ENCODE measurements at regions of chr2 and their contacts with region 1.

Region 1: GRCh38 chr2:231191896-231192872 is 6.2 kb upstream of the ARMC9 start:
- DNase-seq: peak; percentile 89
- H3K4me3 ChIP-seq: no peak overlapping the region
- H3K27ac ChIP-seq: peak overlapping the region; percentile 29 to 70; a peak in 3 of 4 replicates
- H3K4me1 ChIP-seq: peaks cover 7 to 15% of the 10 kb centered on the region in 2 experiments; a peak in 1 of 4 replicates
- H3K27me3 ChIP-seq: no peaks in the 10 kb centered on the region
- CTCF ChIP-seq: peak; percentile 81
- EP300 ChIP-seq: peak in 1 of 2 experiments; percentile 36; a peak in 1 of 4 replicates
- RAD21 ChIP-seq: peak; percentile 94

Region 2: DNA sequence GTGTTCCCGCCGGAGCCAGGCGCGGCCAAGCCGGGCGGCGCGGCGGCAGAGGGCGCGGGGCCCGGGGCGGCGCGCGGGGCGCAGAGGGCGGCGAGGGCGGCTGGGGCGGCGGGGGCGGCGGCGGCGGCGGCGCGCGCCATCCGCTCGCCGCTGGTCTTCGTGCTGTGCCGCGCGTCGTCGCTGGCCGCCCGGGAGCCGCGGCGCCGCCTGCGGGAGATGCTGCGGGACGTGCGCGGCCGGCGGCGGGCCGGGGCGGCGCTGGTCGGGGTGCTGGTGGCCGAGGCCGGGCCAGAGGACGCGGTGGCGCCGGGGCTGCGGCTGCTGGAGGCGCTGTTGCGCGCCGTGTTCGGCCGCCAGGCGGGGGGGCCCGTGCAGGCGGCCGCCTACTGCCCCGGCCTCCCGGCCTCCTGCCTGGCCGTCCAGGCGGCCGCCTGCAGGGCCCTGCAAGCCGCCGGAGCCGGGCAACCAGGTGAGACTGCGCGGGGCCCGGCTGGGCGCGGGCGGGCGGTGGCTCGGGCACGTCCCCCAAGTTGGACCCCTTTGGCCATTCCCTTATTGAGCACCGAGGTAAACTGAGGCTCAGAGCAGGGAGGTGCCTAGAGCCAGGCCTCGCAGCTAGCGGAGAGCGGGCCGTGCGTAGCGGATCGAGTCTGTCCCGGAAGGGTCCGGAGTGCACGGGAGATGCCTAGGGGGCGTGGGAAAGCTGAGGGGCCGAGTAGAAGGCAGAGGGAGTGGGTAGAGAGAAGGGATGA is 154.3 kb before region 1 on chr2:
- CTCF ChIA-PET with region 1: no interaction called
- POLR2A ChIA-PET with region 1: no interaction called
- DNase-seq: peak; percentile 91
- H3K4me3 ChIP-seq: peak overlapping the region in 1 of 2 experiments; percentile 47; a peak in 2 of 4 replicates
- H3K27ac ChIP-seq: no peak overlapping the region
- H3K4me1 ChIP-seq: peaks cover 0 to 6% of the 10 kb centered on the region in 2 experiments; a peak in 1 of 4 replicates
- H3K27me3 ChIP-seq: peaks cover 32% of the 10 kb centered on the region
- CTCF ChIP-seq: no peak
- EP300 ChIP-seq: no peak
- RAD21 ChIP-seq: no peak

Region 3: GRCh38 chr2:231110551-231110950 is 81.6 kb before region 1 on chr2:
- CTCF ChIA-PET with region 1: interaction called, 162 read pairs
- POLR2A ChIA-PET with region 1: no interaction called
- DNase-seq: no peak
- H3K4me3 ChIP-seq: no peak overlapping the region
- H3K27ac ChIP-seq: peak overlapping the region in 1 of 2 experiments; percentile 69; a peak in 2 of 4 replicates
- H3K4me1 ChIP-seq: peaks cover 4 to 9% of the 10 kb centered on the region in 2 experiments; a peak in 3 of 4 replicates
- H3K27me3 ChIP-seq: no peaks in the 10 kb centered on the region
- CTCF ChIP-seq: peak; percentile 44
- EP300 ChIP-seq: no peak
- RAD21 ChIP-seq: peak; percentile 74

Region 4: DNA sequence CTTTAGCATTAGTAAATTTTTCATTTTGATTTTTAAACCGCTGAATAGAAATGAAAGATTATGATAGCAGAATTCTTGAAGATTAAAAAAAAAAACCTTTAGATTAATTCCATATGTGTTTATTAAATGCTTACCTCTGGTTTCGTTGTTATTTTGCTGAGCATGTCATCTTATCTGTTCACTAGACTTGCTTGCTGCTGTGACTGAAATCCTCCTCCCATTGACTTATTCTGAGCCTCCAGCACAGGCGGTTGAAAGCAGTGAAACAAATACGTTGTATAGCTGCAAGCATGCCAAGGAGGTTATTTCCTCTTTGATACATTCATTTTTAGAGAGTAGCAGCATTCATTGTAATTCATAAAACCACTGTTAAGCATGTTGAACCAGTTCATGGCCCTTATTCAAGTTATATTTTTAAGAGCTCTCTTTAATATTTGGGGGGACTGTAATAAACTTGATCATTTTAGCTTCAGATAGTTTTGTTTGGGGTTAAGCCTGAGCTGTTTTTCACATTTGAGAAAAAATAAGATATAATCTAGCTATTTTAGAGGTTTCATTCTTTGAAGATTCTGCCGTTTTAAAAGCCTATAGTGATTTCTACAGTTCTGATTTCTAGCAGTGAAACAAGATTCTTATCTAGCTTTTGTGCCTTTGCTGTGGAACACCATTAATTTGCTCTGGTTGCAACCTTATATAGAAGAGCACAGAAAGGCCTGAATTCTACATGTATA is 67.2 kb before region 1 on chr2 and contains the start of gene HTR2B:
- CTCF ChIA-PET with region 1: interaction called, 15 read pairs
- POLR2A ChIA-PET with region 1: interaction called, 3 read pairs
- DNase-seq: peak; percentile 62
- H3K4me3 ChIP-seq: peak within 1 kb of the TSS; percentile 12 to 42; a peak in 2 of 4 replicates
- H3K27ac ChIP-seq: peak within 1 kb of the TSS; percentile 62 to 94
- H3K4me1 ChIP-seq: peaks cover 34 to 37% of the 10 kb centered on the region in 2 experiments; a peak in 3 of 4 replicates
- H3K27me3 ChIP-seq: no peaks in the 10 kb centered on the region
- CTCF ChIP-seq: no peak
- EP300 ChIP-seq: peak in 1 of 2 experiments; percentile 51; a peak in 1 of 4 replicates
- RAD21 ChIP-seq: peak; percentile 20; the same call in 1 of the 2 replicates
- polyA plus RNA-seq, gene HTR2B: 0.25 and 0.41 TPM in 2 replicates

Region 5: GRCh38 chr2:231170055-231170454 is 22.1 kb before region 1 on chr2:
- CTCF ChIA-PET with region 1: interaction called, 11 read pairs
- POLR2A ChIA-PET with region 1: no interaction called
- DNase-seq: no peak
- H3K4me3 ChIP-seq: no peak overlapping the region
- H3K27ac ChIP-seq: peak overlapping the region; percentile 82 to 96
- H3K4me1 ChIP-seq: peaks cover 12 to 17% of the 10 kb centered on the region in 2 experiments
- H3K27me3 ChIP-seq: no peaks in the 10 kb centered on the region
- CTCF ChIP-seq: no peak
- EP300 ChIP-seq: no peak; a peak in 1 of 4 replicates
- RAD21 ChIP-seq: no peak

Region 6: DNA sequence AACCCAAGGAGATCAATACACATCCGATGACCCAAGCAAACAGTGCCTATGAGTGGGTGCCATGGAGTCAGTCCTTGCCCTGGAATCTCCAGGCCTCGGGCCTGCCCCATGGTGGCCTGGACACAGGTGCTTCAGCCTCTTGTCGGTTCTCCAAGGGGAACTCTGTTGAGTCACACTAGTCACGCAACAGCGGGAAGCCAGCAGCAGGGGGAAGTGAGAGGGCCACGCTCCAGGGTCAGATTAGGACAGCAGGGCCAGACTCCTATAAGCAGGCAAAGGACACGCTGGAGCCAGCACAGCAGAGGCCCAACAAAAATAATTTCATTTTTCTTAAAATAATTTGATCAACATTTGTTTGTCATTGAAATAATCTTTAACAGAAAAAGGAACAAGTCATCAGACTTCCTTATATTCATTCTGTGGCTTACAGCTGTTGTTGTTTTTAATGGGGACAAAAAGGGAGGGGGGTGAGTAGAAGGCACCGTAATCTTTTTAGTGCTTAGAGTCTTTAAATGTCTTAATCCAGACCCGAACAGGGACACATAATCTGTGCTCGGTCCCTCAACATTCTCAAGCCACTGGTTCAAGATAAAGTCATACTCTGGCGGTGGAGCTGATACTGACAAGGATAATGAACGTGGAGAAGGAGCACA is 10.2 kb before region 1 on chr2:
- CTCF ChIA-PET with region 1: interaction called, 15 read pairs
- POLR2A ChIA-PET with region 1: no interaction called
- DNase-seq: no peak
- H3K4me3 ChIP-seq: no peak overlapping the region
- H3K27ac ChIP-seq: no peak overlapping the region
- H3K4me1 ChIP-seq: peaks cover 5 to 14% of the 10 kb centered on the region in 2 experiments; a peak in 2 of 4 replicates
- H3K27me3 ChIP-seq: no peaks in the 10 kb centered on the region
- CTCF ChIP-seq: no peak
- EP300 ChIP-seq: no peak
- RAD21 ChIP-seq: no peak